Left ventricle myocardium inferior (tissue), 1 donor: ENCODE measurements at regions of chr9 and their contacts with region 1.

Region 1: GRCh38 chr9:87516222-87516925 is 18.7 kb downstream of the DAPK1 start:
- DNase-seq: peak; percentile 28
- H3K4me3 ChIP-seq: no peak overlapping the region
- H3K27ac ChIP-seq: no peak overlapping the region
- H3K4me1 ChIP-seq: peaks cover 14% of the 10 kb centered on the region
- H3K27me3 ChIP-seq: no peaks in the 10 kb centered on the region
- CTCF ChIP-seq: no peak

Region 2: GRCh38 chr9:87259543-87260518 is 256.5 kb before region 1 on chr9:
- intact Hi-C with region 1: no loop called
- DNase-seq: no peak
- H3K4me3 ChIP-seq: no peak overlapping the region
- H3K27ac ChIP-seq: peak overlapping the region; percentile 15
- H3K4me1 ChIP-seq: peaks cover 12% of the 10 kb centered on the region
- H3K27me3 ChIP-seq: no peaks in the 10 kb centered on the region
- CTCF ChIP-seq: no peak

Region 3: DNA sequence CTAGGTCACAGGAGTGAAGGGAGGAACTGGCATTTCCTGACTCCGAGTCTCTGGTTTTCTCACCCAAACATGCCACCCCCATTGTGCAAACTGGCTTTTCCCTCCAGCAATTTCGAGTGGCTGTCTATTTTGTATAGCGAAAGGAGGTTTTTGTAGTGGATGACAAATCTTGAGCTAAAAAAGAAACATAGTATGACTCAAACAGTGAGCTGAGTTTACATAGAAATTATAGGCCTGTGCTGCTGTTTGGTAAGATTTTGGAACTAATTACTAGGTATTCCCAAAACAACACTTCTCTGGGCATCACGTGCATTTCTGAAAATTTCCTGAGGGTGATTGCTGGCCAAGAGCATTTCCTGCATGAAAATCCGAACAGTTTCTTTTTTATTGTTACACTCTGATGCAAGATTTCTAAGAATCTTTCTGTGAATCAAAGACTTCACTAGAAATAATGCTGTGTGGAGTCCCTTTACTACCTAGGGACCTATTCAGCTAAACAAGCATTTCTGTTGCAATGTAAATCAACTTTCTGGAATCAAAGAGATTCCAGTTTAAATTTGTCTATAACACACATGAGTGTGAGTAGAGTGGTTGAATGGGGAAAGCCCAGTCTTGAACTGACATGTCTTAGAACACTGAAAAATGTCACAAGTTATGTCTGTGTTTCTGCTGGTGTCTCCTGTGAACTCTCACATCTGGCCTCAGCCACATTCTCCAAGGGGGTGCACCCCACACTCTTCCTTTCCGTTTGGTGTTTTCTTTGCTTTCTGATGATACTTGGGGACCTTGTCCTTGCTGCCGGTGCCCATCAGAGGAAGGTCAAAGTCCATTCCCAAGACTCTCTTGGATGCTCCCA is 52.0 kb before region 1 on chr9:
- intact Hi-C with region 1: loop called (anchors 10 kb)
- DNase-seq: no peak
- H3K4me3 ChIP-seq: no peak overlapping the region
- H3K27ac ChIP-seq: no peak overlapping the region
- H3K4me1 ChIP-seq: no peaks in the 10 kb centered on the region
- H3K27me3 ChIP-seq: no peaks in the 10 kb centered on the region
- CTCF ChIP-seq: no peak